ENCODE measurements at regions of chr11 and their contacts with region 1.

Region 1: DNA sequence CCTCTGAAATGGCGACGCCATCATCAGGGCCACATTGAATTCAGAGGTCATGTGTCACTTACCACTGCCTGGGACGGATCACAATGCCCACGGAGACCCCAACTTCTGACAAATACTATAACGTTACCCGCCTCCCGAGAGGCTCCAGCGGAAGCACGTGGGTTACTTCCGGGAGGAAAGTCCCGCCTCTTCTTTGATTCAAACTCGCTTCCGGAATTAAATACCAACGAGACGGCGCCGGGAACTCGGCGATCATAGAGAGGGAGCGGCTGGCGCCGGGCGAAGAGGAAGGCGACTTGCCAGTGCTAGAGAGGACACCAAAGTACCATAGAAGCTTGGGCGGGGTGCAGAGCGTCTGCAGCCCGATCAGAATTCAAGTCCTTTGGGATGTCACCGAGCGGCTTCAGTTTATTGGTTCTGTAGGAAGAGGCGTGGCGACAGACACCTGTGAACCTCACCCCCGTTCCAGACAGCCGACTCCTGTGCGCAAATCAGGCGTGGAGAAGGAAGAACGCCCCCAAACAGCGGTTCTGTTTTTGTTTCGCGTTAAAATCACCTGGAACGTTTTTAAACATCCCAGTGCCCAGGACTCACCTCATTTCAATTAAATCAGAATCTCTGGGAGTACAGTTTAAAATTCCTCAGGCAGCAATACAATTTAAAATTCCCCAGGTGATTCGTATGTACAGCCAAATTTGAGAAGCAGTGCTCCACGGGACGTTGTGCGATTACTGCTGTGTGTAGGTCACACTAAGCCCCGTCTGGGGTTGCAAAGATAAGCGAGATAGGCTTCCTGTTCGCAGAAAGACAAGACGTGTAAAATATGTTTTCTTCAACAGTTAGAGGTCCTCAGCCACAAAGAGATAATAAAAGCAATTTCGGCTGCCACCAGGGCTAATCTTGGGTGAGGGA is at the start of gene TIMM10:
- DNase-seq: peak; percentile 82 to 99 (median 91)
- ATAC-seq: peak; percentile 91
- H3K4me3 ChIP-seq: peak within 1 kb of the TSS; percentile 85
- H3K4me3 Mint-ChIP-seq: peak within 1 kb of the TSS; percentile 89
- H3K27ac ChIP-seq: peak within 1 kb of the TSS; percentile 78 to 91
- H3K27ac Mint-ChIP-seq: peak within 1 kb of the TSS; percentile 90
- H3K4me1 ChIP-seq: peaks cover 24% of the 10 kb centered on the region
- H3K4me1 Mint-ChIP-seq: peaks cover 25% of the 10 kb centered on the region
- H3K27me3 ChIP-seq: no peaks in the 10 kb centered on the region
- H3K27me3 Mint-ChIP-seq: no peaks in the 10 kb centered on the region
- CTCF ChIP-seq: no peak
- total RNA-seq, gene TIMM10: 28.0 TPM

Region 2: DNA sequence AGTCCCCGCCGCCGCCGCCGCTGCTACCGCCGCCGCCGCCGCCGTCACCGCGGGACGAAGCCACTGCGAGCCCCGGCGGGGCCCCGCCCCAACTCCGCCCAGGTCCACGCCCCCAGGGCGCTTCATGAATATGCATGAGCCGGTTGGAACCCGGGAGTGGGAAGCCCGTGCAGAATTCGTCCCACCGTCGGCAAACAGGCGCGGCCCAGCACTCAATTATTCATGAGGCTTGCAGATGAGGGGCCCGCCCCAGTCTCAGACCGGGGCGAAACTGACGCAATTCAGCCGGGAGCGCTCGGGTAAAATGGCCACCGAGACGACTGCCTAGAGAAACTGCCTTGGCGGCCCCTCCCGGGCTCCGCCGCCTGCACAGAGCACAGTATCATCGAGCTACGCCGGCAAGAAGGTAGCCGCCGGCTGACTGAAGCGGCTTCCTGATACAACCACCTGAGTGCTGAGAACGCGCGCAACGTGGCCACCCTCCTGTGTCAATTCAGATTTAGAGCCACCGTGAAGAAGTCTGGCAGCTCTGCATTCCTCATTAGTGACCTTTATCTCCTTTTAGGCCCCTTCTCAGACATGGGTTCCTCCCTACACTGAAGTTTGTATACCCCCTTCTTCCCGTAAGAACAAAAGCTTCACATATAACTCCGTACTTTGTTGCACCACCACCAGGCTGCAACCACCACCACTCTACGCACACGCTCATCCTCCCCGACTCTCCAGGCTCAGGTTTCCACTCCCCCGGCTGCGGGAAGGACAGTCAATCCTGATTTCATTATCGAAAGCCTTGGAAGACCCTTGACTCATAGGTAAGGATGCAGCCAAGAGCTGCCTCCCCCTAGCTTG is 205.7 kb before region 1 on chr11 and contains the start of gene TNKS1BP1:
- CTCF ChIA-PET with region 1: interaction called, 3 read pairs
- POLR2A ChIA-PET with region 1: interaction called, 11 read pairs
- intact Hi-C with region 1: no loop called
- DNase-seq: peak; percentile 76 to 95 (median 87)
- ATAC-seq: peak; percentile 90
- H3K4me3 ChIP-seq: peak within 1 kb of the TSS; percentile 80
- H3K4me3 Mint-ChIP-seq: peak within 1 kb of the TSS; percentile 93
- H3K27ac ChIP-seq: peak within 1 kb of the TSS; percentile 82 to 84
- H3K27ac Mint-ChIP-seq: peak within 1 kb of the TSS; percentile 95
- H3K4me1 ChIP-seq: peaks cover 30% of the 10 kb centered on the region
- H3K4me1 Mint-ChIP-seq: peaks cover 45% of the 10 kb centered on the region
- H3K27me3 ChIP-seq: no peaks in the 10 kb centered on the region
- H3K27me3 Mint-ChIP-seq: no peaks in the 10 kb centered on the region
- CTCF ChIP-seq: no peak
- total RNA-seq, gene TNKS1BP1: 12.9 to 13.2 TPM

Region 3: DNA sequence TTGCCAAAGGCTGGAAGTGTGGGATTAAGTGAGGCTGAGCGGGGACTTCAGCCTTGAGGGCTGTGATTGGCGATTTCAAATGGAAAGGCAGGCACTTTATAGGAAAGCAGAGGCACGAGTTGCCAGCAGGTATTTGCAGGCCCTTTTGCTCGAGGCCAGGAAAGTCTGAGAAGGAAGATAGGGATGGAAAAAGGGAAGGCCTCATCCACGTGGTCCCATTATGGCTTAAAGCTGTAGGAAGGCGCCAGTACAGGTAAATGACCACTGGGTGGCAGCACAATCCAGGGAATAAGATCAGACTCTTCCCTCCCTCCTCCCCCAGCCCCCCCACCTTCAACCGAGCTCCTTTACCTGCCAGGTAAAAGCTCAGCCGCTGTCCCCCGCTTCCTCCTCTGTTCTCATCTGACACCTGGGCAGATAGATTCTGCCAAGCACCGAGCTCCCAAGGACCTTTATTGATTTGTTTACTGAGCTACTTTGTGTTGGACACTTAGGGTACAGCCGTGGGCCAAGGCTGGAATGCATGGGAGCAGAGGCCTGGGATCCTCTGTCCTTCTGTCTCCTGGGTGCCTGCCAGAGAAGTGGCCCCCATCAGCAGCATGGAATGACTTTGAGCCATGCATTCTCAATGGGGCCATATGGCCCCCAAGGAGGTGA is 185.2 kb before region 1 on chr11:
- CTCF ChIA-PET with region 1: interaction called, 6 read pairs
- POLR2A ChIA-PET with region 1: no interaction called
- intact Hi-C with region 1: loop called (anchors 1 kb)
- DNase-seq: peak; percentile 52 to 87 (median 64)
- ATAC-seq: peak; percentile 93
- H3K4me3 ChIP-seq: no peak overlapping the region
- H3K4me3 Mint-ChIP-seq: no peak overlapping the region
- H3K27ac ChIP-seq: no peak overlapping the region
- H3K27ac Mint-ChIP-seq: no peak overlapping the region
- H3K4me1 ChIP-seq: peaks cover 12% of the 10 kb centered on the region
- H3K4me1 Mint-ChIP-seq: peaks cover 4% of the 10 kb centered on the region
- H3K27me3 ChIP-seq: peaks cover 0 to 3% of the 10 kb centered on the region in 2 experiments
- H3K27me3 Mint-ChIP-seq: no peaks in the 10 kb centered on the region
- CTCF ChIP-seq: peak; percentile 73

Region 4: DNA sequence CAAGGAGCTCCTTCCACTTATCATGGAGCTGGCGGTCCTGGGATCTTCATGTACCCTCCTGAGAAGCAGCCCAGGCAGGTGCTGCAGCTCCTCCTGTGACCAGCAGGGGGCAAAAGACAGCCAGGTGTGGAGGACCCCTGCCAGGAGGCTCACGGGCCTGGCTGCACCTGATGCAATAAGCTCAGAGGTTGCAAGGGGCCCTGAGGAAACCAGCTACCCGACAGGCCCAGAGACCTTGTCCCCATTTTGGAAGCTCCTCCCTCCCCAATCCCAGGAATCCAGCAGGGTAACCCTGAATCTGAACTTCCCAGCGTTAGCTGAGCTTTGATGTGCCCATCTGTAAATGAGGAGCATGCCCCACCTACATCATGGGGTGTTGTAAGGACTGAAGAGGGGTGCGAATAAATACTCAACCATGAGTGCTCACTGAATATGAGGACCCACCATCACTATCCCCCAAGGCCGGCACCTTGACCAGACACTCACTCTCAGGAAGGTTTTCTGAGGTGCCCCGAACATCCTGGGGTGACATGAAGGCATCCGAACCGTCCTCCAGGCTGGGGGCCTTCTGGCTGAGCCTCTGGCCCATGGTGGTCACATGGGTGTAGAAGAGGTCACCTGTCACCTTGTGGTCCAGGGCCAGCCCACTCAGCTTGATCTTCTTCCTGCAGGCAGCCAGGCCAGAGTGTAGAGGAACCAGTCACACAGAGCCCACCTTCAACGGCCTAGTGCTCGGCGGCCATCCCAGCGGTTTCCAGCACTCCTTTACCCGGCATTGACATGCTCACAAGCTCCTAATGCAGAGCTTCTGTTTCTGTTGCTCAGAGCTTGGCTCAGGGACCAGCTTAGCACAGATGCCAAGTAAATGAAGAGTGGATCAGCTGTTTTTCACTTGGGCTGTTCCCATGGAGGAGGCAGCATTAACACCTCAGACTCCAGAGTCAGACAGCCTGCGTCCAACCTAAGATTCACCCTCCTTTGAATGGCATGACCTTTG is 37.0 kb before region 1 on chr11:
- CTCF ChIA-PET with region 1: interaction called, 130 read pairs
- POLR2A ChIA-PET with region 1: interaction called, 28 read pairs
- intact Hi-C with region 1: loop called (anchors 1 kb)
- DNase-seq: peak; percentile 63 to 84 (median 69)
- ATAC-seq: peak; percentile 94
- H3K4me3 ChIP-seq: no peak overlapping the region
- H3K4me3 Mint-ChIP-seq: no peak overlapping the region
- H3K27ac ChIP-seq: no peak overlapping the region
- H3K27ac Mint-ChIP-seq: no peak overlapping the region
- H3K4me1 ChIP-seq: peaks cover 4% of the 10 kb centered on the region
- H3K4me1 Mint-ChIP-seq: no peaks in the 10 kb centered on the region
- H3K27me3 ChIP-seq: no peaks in the 10 kb centered on the region
- H3K27me3 Mint-ChIP-seq: no peaks in the 10 kb centered on the region
- CTCF ChIP-seq: peak; percentile 97

Region 5: DNA sequence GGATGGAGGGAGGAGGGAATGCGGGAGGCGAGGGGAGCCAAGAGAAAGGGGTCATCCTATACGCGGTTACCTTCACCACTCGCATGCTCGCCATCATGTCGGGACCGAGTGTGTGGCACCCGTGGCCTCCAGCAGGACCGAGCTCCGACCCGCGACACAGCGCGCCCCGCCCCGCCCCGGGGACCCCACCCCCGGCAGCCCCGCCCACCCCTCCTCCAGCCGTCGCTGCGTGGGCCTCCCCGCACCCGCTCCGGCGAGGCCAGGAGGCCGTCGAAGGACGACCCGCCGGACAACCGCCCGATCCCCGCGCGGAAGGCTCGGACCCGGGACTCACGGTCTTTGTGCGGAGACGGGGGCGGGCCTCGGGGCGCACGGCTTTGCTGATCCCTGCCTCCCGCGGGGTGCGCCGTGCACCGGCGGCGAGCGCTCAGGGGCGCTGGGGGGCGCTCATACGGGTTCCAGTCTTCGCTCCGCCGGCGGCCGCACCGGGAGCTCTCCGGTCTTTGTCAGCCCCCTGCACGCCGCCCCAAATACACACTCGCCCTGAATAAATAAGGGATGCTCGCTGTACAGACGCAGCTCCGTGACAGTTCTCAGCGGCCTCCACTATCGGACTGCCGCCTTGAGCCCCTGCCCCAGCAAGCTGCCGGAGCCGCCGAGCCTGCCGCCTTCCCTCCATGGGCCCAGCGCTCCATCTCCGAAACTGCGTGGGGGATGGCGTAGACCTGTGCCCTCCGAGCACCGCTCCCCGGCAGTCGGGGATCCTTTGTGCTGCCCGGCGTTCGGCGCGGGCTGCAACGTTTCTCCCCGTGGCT is 36.9 kb after region 1 on chr11 and contains the start of gene UBE2L6:
- CTCF ChIA-PET with region 1: interaction called, 14 read pairs
- POLR2A ChIA-PET with region 1: interaction called, 4 read pairs
- intact Hi-C with region 1: loop called (anchors 2 kb)
- DNase-seq: peak; percentile 35 to 94 (median 74)
- ATAC-seq: peak; percentile 76
- H3K4me3 ChIP-seq: peak within 1 kb of the TSS; percentile 95
- H3K4me3 Mint-ChIP-seq: peak within 1 kb of the TSS; percentile 100
- H3K27ac ChIP-seq: peak within 1 kb of the TSS; percentile 80 to 82
- H3K27ac Mint-ChIP-seq: peak within 1 kb of the TSS; percentile 92
- H3K4me1 ChIP-seq: peaks cover 33% of the 10 kb centered on the region
- H3K4me1 Mint-ChIP-seq: peaks cover 53% of the 10 kb centered on the region
- H3K27me3 ChIP-seq: no peaks in the 10 kb centered on the region
- H3K27me3 Mint-ChIP-seq: no peaks in the 10 kb centered on the region
- CTCF ChIP-seq: no peak
- total RNA-seq, gene UBE2L6: 35.0 to 36.2 TPM

Region 6: DNA sequence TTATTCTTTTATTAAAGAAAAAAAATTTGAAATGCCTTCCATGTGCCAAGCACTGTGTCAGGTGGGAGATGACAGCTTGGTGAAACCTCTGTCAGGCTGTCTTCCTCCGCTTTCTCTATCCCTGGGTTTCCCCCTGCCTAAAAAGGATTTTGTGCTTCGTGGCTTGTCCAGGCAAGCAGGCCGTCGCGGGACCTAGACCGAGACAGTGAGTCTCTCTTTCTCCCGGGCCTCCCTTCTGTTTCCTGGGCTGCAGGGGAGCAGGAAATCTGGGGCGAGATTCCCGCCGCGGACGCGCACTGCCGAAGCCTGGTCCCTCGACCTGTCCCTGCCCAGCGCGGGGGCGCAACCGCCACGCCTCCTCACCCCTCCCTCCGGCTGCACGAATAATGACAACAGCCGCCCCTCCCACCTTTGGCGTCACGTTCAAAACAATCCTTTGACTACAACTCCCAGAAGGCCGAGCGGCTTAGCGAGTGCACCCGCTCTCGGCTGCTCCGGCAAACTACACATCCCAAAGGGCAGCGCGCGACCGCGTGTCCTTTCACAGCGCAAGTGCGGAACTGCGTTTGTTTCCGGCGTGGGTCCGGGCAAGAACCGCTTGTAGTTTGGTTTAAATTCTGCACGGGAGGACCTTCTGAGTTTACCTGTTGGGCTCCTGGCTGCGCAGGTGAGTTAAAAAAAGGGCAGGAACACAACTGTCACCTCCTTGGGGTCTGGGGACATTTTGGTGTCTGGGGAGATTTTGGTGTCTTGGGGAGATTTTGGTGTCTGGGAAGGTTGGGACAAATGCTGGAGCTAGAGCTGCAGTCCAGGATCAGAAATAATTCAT is 126.6 kb after region 1 on chr11 and contains the start of gene CLP1:
- CTCF ChIA-PET with region 1: no interaction called
- POLR2A ChIA-PET with region 1: no interaction called
- intact Hi-C with region 1: loop called in 1 of 2 experiments (anchors 2 kb)
- DNase-seq: peak; percentile 94 to 100 (median 98)
- ATAC-seq: peak; percentile 95
- H3K4me3 ChIP-seq: peak within 1 kb of the TSS; percentile 93
- H3K4me3 Mint-ChIP-seq: peak within 1 kb of the TSS; percentile 96
- H3K27ac ChIP-seq: peak within 1 kb of the TSS; percentile 92 to 93
- H3K27ac Mint-ChIP-seq: peak within 1 kb of the TSS; percentile 90
- H3K4me1 ChIP-seq: peaks cover 24% of the 10 kb centered on the region
- H3K4me1 Mint-ChIP-seq: peaks cover 24% of the 10 kb centered on the region
- H3K27me3 ChIP-seq: no peaks in the 10 kb centered on the region
- H3K27me3 Mint-ChIP-seq: no peaks in the 10 kb centered on the region
- CTCF ChIP-seq: no peak
- total RNA-seq, gene CLP1: 21.8 to 24.2 TPM